Activated naive CD4-positive, alpha-beta T cell treated with anti-CD3 and anti-CD28 coated beads, Interleukin-2, amount 10 ng/mL, durations not matched to agents 7 days and 5 days (primary cell): ENCODE measurements at regions of chr16 and their contacts with region 1.

Region 1: DNA sequence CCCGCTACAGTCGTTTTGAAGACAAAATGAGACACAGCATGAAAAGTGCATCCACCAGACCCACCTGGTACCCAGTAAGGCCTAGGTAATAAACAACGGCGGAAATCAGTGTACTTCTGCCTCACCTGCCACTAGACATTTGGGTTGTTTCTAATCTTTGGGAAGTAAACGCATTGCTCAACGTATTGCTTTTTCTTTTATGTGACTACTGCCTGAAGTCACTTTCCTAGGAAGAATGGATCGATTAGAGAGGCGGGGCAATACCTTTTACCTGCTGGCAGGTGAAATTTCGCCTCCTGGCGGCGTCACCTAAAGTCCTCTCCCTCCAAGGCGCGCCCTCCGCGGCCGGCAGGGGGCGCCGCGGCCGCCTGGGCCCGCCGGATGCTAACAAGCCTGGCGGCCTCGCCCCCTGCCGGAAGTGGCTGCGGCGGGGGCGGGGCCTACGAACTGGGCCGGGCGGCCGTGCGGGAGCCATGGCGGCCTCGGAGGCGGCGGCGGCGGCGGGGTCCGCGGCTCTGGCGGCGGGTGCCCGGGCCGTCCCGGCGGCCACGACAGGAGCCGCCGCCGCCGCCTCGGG is at the start of gene ATMIN:
- DNase-seq: peak; percentile 87
- H3K4me3 Mint-ChIP-seq: peak within 1 kb of the TSS; percentile 83
- H3K27ac Mint-ChIP-seq: peak within 1 kb of the TSS; percentile 89
- H3K4me1 Mint-ChIP-seq: peaks cover 37% of the 10 kb centered on the region
- H3K27me3 Mint-ChIP-seq: no peaks in the 10 kb centered on the region

Region 2: GRCh38 chr16:81003610-81004460 is 31.7 kb before region 1 on chr16:
- CTCF ChIA-PET with region 1: interaction called, 12 read pairs
- DNase-seq: no peak
- H3K4me3 Mint-ChIP-seq: peak overlapping the region; percentile 90
- H3K27ac Mint-ChIP-seq: peak overlapping the region; percentile 87
- H3K4me1 Mint-ChIP-seq: peaks cover 65% of the 10 kb centered on the region
- H3K27me3 Mint-ChIP-seq: no peaks in the 10 kb centered on the region

Region 3: GRCh38 chr16:81018496-81018895 is 17.0 kb before region 1 on chr16:
- CTCF ChIA-PET with region 1: interaction called, 21 read pairs
- DNase-seq: no peak
- H3K4me3 Mint-ChIP-seq: no peak overlapping the region
- H3K27ac Mint-ChIP-seq: peak overlapping the region; percentile 63
- H3K4me1 Mint-ChIP-seq: no peaks in the 10 kb centered on the region
- H3K27me3 Mint-ChIP-seq: no peaks in the 10 kb centered on the region

Region 4: DNA sequence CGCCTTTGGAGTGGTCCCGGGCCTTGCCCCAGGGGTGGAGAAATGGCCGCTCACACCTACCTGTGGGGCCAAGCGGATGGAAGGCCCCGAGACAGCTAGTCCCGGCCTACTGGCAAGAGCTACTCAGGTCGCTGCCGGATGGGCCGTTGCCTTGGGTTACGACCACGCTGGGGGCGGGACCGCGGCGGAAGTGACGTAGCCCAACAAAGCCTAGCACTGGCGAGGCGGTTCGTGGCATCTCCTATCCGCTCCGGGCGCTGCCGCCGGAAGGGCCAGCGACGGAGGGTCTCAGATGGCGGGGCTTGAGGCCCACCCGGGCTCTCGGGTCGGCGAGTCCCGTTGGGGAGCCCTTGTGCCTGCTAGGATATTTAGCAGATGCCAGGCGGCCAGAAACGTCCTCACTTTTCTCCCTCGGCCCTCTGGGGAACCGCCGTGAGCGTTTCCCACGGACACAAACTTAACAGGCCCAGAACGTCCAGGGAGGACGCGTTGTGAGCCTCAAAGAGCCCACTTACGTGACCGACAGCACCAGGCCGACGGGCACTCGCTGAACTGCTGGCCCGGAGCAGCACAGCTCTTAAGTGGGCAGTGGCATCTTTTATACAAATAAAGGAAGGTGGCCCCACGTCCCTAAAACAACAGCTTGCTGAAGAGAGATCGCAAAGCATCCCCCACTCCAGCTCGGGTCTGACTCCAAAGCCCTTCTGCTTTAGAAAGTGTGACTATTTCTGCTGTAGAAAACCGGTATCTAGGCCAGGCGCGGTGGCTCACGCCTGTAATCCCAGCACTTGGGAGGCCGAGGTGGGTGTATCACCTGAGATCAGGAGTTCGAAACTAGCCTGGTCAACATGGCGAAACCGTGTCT is 41.8 kb after region 1 on chr16 and contains the start of gene C16orf46:
- CTCF ChIA-PET with region 1: interaction called, 10 read pairs
- DNase-seq: peak; percentile 99
- H3K4me3 Mint-ChIP-seq: no peak within 1 kb of the TSS
- H3K27ac Mint-ChIP-seq: peak within 1 kb of the TSS; percentile 46
- H3K4me1 Mint-ChIP-seq: peaks cover 20% of the 10 kb centered on the region
- H3K27me3 Mint-ChIP-seq: no peaks in the 10 kb centered on the region